PC-3 (cell line): ENCODE measurements at regions of chr7 and their contacts with region 1.

Region 1: GRCh38 chr7:80362010-80362618 is 149.8 kb downstream of the GNAT3 start:
- DNase-seq: peak; percentile 65
- ATAC-seq: peak; percentile 77
- H3K4me3 ChIP-seq: peak overlapping the region; percentile 36; the same call in 1 of the 2 replicates
- H3K27ac ChIP-seq: peak overlapping the region; percentile 95
- H3K4me1 ChIP-seq: peaks cover 29% of the 10 kb centered on the region
- H3K27me3 ChIP-seq: no peaks in the 10 kb centered on the region
- CTCF ChIP-seq: no peak

Region 2: DNA sequence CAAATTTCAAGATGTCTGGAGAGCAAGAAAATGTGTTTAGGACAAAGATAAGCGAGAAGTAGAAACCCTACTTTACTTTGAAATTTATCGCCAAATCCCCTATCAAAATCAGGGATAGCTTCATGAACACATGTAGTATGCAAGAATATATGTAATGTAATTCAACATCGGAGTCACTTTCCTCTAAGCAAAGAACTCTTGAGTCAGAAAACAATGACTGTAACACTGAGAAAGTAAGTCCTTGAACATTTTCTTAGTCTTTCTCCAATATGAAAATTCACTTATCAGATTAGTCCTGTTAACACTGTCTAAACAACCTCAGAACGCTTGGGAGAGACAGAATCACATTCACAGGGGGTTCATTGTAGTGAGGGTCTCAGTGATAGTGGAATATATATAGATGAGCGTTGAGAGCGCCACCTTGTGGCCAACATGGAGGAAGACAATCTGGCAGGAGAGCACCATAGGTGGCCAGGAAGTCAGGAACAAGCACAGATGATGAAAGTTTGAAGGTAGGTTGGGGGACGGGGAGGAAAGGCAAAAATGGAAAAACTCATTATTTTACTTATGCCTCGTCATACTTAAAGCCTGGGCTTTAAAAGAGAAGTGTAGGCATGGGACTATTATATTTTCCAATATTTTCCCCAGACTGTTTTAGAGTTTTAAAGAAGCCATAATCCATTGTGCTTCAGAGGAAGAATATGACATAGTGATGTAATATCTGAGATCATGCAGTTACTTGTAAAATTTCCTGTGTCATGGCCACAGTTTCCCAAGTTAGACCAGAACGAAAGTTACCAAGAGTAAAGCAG is 343.0 kb before region 1 on chr7:
- CTCF ChIA-PET with region 1: no interaction called
- POLR2A ChIA-PET with region 1: no interaction called
- intact Hi-C with region 1: no loop called
- DNase-seq: peak; percentile 56
- ATAC-seq: peak; percentile 75
- H3K4me3 ChIP-seq: no peak overlapping the region
- H3K27ac ChIP-seq: no peak overlapping the region
- H3K4me1 ChIP-seq: peaks cover 9% of the 10 kb centered on the region
- H3K27me3 ChIP-seq: no peaks in the 10 kb centered on the region
- CTCF ChIP-seq: peak; percentile 95

Region 3: DNA sequence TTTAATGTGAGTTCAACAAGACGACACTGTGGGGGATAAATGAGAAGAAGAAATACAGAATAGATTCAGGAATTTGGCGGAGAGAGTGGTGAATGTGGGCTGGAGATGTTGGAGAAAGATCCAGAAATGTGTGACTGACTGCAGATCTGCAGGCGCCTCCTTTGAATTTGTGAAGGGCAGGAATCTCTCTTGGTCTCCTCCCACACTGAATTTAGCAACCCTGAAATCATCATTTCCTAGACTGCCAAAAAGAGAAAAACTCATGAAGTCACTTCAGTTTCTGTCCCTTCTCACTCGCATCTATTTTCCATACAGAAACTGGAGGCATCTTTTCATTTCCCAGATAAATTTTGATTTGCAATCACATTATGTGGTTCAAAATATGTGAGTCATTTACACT is 98.8 kb before region 1 on chr7:
- CTCF ChIA-PET with region 1: no interaction called
- POLR2A ChIA-PET with region 1: no interaction called
- intact Hi-C with region 1: no loop called
- DNase-seq: no peak
- ATAC-seq: no peak
- H3K4me3 ChIP-seq: no peak overlapping the region
- H3K27ac ChIP-seq: no peak overlapping the region
- H3K4me1 ChIP-seq: no peaks in the 10 kb centered on the region
- H3K27me3 ChIP-seq: no peaks in the 10 kb centered on the region
- CTCF ChIP-seq: no peak

Region 4: DNA sequence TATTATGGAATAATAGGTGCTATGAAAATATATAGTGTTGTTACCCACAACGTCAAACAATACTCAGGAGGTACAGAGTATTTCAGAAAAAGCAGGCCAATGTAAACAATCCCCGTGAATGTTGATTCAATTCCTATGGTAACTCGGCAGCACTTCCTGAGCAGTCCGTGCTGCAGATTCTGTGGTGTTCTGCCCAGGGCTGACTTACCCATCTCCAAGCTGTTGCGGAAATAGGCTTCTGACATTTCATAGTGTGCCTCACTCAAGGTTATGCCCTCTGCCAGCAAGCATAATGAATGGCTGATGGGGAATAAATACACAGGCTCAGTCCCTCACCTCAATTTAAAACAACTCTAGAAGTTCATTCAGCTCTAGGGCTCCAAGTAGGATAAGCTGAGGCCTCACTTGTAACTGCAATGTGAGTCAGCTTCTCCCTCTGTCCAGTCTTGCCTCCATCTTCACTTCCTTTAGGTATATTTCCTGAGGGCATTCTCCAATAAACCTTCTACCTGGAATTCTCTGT is 49.9 kb before region 1 on chr7:
- CTCF ChIA-PET with region 1: no interaction called
- POLR2A ChIA-PET with region 1: no interaction called
- intact Hi-C with region 1: loop called (anchors 1 kb)
- DNase-seq: peak; percentile 75
- ATAC-seq: peak; percentile 94
- H3K4me3 ChIP-seq: no peak overlapping the region
- H3K27ac ChIP-seq: peak overlapping the region; percentile 74
- H3K4me1 ChIP-seq: peaks cover 23% of the 10 kb centered on the region
- H3K27me3 ChIP-seq: no peaks in the 10 kb centered on the region
- CTCF ChIP-seq: no peak

Region 5: DNA sequence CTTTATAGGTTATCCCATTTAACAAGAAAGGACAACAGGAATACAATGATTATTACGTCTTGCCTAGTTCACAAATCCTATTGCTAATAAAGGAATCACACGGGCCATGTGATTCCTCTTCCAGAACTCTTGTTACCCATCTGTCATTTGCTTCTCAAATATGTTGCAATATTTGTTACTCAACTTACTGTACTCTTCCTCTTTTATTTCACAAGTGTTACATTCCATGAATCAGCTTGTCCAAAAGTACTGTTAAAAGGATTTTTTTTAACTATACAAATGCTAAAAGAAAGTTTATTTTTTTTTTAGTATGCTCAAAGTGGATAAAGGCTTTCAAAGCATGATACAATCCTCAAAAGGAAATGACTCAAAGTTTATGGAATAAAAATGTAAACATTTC is 272.4 kb after region 1 on chr7:
- CTCF ChIA-PET with region 1: no interaction called
- POLR2A ChIA-PET with region 1: no interaction called
- intact Hi-C with region 1: no loop called
- DNase-seq: peak; percentile 78
- ATAC-seq: peak; percentile 95
- H3K4me3 ChIP-seq: no peak overlapping the region
- H3K27ac ChIP-seq: peak overlapping the region; percentile 46
- H3K4me1 ChIP-seq: peaks cover 16% of the 10 kb centered on the region
- H3K27me3 ChIP-seq: no peaks in the 10 kb centered on the region
- CTCF ChIP-seq: no peak